ENCODE measurements at regions of chr2 and their contacts with region 1.

Region 1: GRCh38 chr2:111032721-111033429 is 87.8 kb upstream of the BCL2L11 start:
- DNase-seq: no peak
- H3K4me3 Mint-ChIP-seq: no peak overlapping the region
- H3K27ac Mint-ChIP-seq: no peak overlapping the region
- H3K4me1 Mint-ChIP-seq: peaks cover 46% of the 10 kb centered on the region
- H3K27me3 Mint-ChIP-seq: peaks cover 38% of the 10 kb centered on the region

Region 2: GRCh38 chr2:110157153-110157793 is 875.6 kb before region 1 on chr2:
- intact Hi-C with region 1: no loop called
- DNase-seq: no peak
- H3K4me3 Mint-ChIP-seq: no peak overlapping the region
- H3K27ac Mint-ChIP-seq: no peak overlapping the region
- H3K4me1 Mint-ChIP-seq: peaks cover 29% of the 10 kb centered on the region
- H3K27me3 Mint-ChIP-seq: peaks cover 18% of the 10 kb centered on the region

Region 3: DNA sequence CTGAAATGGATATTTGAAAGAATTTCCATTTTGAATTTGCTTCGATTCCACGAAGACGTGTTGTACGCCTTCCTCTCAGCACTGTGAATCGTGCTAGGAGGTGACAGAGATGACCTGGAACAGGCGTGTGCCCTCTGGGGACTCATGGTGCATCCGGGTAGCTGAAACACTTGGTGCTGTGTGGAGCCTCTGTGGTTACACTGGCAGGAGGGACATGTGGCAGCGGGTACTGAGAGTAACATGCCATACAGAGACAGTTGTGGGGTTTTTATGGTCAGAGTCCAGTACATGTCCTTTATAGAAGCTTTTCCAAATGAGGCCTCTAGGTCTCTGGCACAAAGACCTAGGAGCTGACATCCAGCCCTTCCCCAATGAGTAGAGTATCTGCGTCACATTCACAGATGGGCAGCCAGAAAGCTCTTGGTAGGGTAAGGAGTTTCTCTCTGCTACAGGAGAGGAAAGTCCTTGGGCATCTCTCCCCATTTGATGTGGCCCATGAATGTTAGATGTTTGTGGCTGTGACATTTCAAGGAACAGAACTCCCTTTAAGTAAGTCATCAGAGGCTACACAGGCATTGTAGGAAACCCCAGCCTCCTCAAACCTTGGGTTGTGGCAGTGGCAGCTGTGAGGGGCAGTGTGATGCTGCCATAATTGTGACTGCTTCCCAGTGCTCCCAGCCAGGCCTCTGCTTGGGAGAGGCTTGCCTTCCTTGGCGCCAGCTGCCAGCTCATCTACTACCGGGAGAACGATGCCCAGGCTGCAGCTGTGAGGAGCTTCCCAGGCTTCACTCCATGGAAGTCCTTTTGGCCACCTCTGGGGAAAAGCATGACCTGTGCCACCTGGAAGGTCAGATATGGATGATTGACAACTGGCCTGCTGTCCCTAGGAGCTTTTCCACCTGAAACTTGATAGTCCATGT is 219.9 kb before region 1 on chr2:
- intact Hi-C with region 1: loop called (anchors 5 kb)
- DNase-seq: no peak
- H3K4me3 Mint-ChIP-seq: no peak overlapping the region
- H3K27ac Mint-ChIP-seq: no peak overlapping the region
- H3K4me1 Mint-ChIP-seq: peaks cover 24% of the 10 kb centered on the region
- H3K27me3 Mint-ChIP-seq: peaks cover 14% of the 10 kb centered on the region

Region 4: GRCh38 chr2:110919738-110920137 is 113.1 kb before region 1 on chr2:
- intact Hi-C with region 1: no loop called
- DNase-seq: no peak
- H3K4me3 Mint-ChIP-seq: no peak overlapping the region
- H3K27ac Mint-ChIP-seq: no peak overlapping the region
- H3K4me1 Mint-ChIP-seq: no peaks in the 10 kb centered on the region
- H3K27me3 Mint-ChIP-seq: peaks cover 52% of the 10 kb centered on the region

Region 5: GRCh38 chr2:111044926-111045635 is 12.2 kb after region 1 on chr2:
- intact Hi-C with region 1: no loop called
- DNase-seq: no peak
- H3K4me3 Mint-ChIP-seq: no peak overlapping the region
- H3K27ac Mint-ChIP-seq: no peak overlapping the region
- H3K4me1 Mint-ChIP-seq: peaks cover 45% of the 10 kb centered on the region
- H3K27me3 Mint-ChIP-seq: peaks cover 20% of the 10 kb centered on the region

Region 6: GRCh38 chr2:111100765-111101162 is 67.9 kb after region 1 on chr2:
- intact Hi-C with region 1: no loop called
- DNase-seq: no peak
- H3K4me3 Mint-ChIP-seq: no peak overlapping the region
- H3K27ac Mint-ChIP-seq: peak overlapping the region; percentile 74
- H3K4me1 Mint-ChIP-seq: peaks cover 14% of the 10 kb centered on the region
- H3K27me3 Mint-ChIP-seq: peaks cover 56% of the 10 kb centered on the region

Measured in activated T-helper 2 cell treated with anti-CD3 and anti-CD28 coated beads, Interferon-gamma antibody, Interleukin-2, Interleukin-4, amounts not matched to agents 10 μg/mL and 5 μg/mL and 100 μg/mL, durations not matched to agents 14 hours and 24 hours and 36 hours (primary cell).